ENCODE measurements at regions of chr19 and their contacts with region 1.

Region 1: DNA sequence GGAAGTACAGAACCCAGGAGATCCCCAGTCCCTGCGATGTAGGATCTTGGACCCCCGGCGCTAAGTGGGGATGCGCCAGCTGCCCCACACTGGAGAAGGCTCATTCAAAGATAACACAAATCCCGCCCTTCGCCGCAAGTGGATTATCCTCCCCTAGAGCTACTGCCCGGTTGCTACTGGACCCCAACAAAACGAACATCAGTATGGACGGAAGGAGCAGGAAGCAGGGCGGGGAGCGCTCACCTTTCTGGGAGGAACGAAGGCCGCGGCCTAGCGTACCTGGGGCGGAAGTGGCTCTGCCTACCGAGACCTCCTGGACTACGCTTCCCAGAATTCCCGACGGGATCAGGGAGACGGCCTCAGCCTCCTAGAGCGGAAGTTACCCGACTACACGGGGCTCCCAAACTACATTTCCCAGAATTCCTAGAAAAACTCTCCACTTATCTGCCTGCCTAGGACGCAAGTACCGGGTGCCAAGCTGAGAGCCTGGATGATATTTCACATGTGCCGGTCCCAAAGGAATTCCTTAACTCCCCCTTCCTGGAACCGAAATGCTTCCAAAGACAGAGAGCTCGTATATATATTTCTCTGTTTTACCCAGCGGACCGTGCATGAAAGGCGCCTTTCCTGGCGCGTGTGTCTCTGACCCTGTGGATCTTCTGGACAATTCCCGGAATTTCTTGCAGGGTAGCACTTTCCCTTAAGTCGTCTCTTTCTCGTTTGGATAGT is at the start of gene ZNF112:
- DNase-seq: peak; percentile 78 to 93
- ATAC-seq: peak; percentile 99 to 100 (median 100)
- H3K4me3 ChIP-seq: peak within 1 kb of the TSS; percentile 29 to 81 (median 60)
- H3K27ac ChIP-seq: peak within 1 kb of the TSS in 9 of 10 donors; percentile 11 to 76 (median 59)
- H3K4me1 ChIP-seq: peaks cover 0 to 14% (median 6%) of the 10 kb centered on the region in 9 donors
- H3K27me3 ChIP-seq: peaks cover 0 to 3% (median 0%) of the 10 kb centered on the region in 7 donors
- CTCF ChIP-seq: no peak
- total RNA-seq, gene ZNF112: 2.6 to 6.4 (median 5.0) TPM

Region 2: GRCh38 chr19:44212250-44212865 is 144.2 kb before region 1 on chr19 and contains the start of gene ZNF227:
- intact Hi-C with region 1: loop called in 2 of 10 experiments (anchors 1 to 10 kb)
- DNase-seq: peak; percentile 89 to 93
- ATAC-seq: peak; percentile 97 to 98 (median 98)
- H3K4me3 ChIP-seq: peak within 1 kb of the TSS; percentile 55 to 91 (median 81)
- H3K27ac ChIP-seq: peak within 1 kb of the TSS; percentile 63 to 92 (median 86)
- H3K4me1 ChIP-seq: peaks cover 0 to 33% (median 20%) of the 10 kb centered on the region in 9 donors
- H3K27me3 ChIP-seq: no peaks in the 10 kb centered on the region
- CTCF ChIP-seq: no peak
- total RNA-seq, gene ZNF227: 10.6 to 18.1 (median 12.6) TPM

Region 3: DNA sequence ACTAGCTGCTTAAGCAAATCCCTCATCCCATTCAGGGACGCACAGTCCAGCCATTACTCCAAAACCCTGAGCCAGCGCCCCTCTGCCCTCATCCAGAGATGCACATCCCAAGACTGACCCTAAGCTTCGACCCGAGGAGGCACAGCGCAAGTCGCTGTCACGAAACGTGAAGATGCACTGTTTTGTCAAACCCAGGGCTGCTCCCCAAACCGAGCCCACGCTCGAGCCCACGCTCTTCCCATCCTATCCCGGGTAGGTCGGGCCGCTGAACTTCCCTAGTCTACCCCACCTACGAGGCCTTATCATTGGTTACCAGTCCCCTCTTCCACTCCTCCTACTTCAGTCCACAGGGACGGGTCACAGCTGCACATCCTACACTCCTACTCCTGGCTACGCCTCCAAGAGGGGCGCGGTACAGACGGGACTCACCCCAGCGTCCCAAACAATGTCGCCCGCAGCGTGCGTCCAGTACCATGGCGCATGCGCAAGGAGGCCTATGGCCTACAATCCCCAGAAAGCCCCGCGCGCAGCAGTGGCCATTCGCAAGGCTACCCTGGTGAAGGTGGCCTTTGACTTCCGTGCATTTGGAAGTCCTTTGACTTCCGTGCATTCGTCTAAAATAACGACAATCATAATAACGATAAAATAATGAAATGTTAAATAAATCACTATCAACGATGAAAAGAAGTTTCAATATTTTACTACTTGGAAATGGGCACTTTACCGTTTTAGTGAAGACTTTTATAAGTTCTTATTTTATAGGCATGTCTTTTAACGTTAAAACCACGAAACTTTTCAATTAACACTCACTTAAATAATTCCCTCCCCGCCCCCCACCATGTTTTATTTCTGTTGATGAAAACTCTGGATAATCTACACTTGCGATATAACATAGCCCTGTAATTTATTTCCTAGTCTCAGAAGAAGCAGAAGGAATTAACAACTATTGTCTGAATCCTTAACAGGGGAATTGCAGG is 44.9 kb after region 1 on chr19 and contains the start of gene ZNF285:
- intact Hi-C with region 1: loop called in 1 of 10 experiments (anchors 1 kb)
- DNase-seq: peak; percentile 95
- ATAC-seq: peak; percentile 99 to 100 (median 100)
- H3K4me3 ChIP-seq: peak within 1 kb of the TSS; percentile 26 to 75 (median 60)
- H3K27ac ChIP-seq: peak within 1 kb of the TSS in 7 of 10 donors; percentile 14 to 66 (median 61)
- H3K4me1 ChIP-seq: peaks cover 0 to 7% (median 0%) of the 10 kb centered on the region in 9 donors
- H3K27me3 ChIP-seq: peaks cover 0 to 9% (median 0%) of the 10 kb centered on the region in 7 donors
- CTCF ChIP-seq: no peak
- total RNA-seq, gene ZNF285: 3.3 to 5.0 (median 3.8) TPM

Region 4: DNA sequence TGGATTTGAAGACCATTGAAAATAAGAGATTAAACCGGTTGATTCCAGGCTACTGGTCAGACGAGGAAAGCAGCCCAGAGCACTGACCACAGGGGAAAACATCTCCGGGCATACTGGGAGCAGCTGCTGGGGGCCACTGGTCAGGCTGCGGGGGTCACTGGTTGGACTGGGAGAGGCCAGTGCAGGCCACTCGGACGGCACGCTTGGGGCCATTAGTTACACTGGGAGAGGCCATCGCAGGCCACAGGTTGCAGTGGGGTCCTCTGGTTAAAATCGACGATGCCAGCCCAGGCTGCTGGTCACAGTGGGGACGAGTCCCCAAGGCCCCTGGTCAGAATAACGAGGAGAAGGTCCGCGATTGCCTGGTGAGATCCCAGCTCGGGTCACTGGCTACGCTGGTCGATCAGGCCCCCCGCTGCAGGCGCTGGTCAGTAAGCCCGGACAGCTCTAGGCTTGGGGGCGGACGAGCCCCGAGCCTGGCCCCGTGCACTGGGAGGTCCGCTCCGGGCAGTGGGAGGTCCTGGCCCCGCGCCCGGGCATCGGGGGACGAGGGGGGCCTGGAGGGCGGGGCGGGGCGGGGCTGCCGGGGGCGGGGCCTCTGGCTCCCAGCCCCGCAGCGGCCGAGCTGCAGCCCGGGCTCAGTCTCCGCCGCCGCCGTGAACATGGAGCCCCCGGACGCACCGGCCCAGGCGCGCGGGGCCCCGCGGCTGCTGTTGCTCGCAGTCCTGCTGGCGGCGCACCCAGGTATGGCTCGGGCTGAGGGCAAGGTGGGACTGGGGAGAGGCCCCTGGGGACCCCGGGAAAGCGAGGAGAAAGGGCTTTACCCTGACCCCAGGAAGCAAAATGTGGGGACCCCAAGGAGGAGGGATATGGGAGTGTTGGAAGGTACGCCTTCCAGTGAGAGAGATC is 452.2 kb after region 1 on chr19 and contains the start of gene BCAM:
- intact Hi-C with region 1: no loop called
- DNase-seq: peak; percentile 87 to 90
- ATAC-seq: peak; percentile 89 to 96 (median 95)
- H3K4me3 ChIP-seq: peak within 1 kb of the TSS; percentile 50 to 95 (median 78)
- H3K27ac ChIP-seq: peak within 1 kb of the TSS; percentile 16 to 96 (median 88)
- H3K4me1 ChIP-seq: peaks cover 11 to 55% (median 23%) of the 10 kb centered on the region in 9 donors
- H3K27me3 ChIP-seq: peaks cover 0 to 15% (median 0%) of the 10 kb centered on the region in 7 donors
- CTCF ChIP-seq: no peak
- total RNA-seq, gene BCAM: 72.8 to 118 (median 92.5) TPM

Region 5: GRCh38 chr19:44954824-44955586 is 598.5 kb after region 1 on chr19 and contains the start of gene CLPTM1:
- intact Hi-C with region 1: no loop called
- DNase-seq: peak; percentile 97 to 98
- ATAC-seq: peak; percentile 95 to 98 (median 97)
- H3K4me3 ChIP-seq: peak within 1 kb of the TSS; percentile 85 to 100 (median 96)
- H3K27ac ChIP-seq: peak within 1 kb of the TSS; percentile 84 to 97 (median 91)
- H3K4me1 ChIP-seq: peaks cover 21 to 74% (median 45%) of the 10 kb centered on the region in 9 donors
- H3K27me3 ChIP-seq: no peaks in the 10 kb centered on the region
- CTCF ChIP-seq: peak in 1 of 9 donors; percentile 13
- total RNA-seq, gene CLPTM1: 81.1 to 130 (median 95.7) TPM

Measured in heart right ventricle (tissue), 16 donors.